Activated B cell treated with CpG ODN at 0.5 μM for 24 hours (primary cell): ENCODE measurements at regions of chr20 and their contacts with region 1.

Region 1: GRCh38 chr20:63973636-63974402 is 4.1 kb upstream of the ZNF512B start:
- DNase-seq: peak; percentile 87
- ATAC-seq: peak; percentile 66
- H3K4me3 Mint-ChIP-seq: peak overlapping the region; percentile 8
- H3K27ac Mint-ChIP-seq: no peak overlapping the region
- H3K4me1 Mint-ChIP-seq: peaks cover 28% of the 10 kb centered on the region
- H3K27me3 Mint-ChIP-seq: no peaks in the 10 kb centered on the region
- CTCF ChIP-seq: peak; percentile 72

Region 2: DNA sequence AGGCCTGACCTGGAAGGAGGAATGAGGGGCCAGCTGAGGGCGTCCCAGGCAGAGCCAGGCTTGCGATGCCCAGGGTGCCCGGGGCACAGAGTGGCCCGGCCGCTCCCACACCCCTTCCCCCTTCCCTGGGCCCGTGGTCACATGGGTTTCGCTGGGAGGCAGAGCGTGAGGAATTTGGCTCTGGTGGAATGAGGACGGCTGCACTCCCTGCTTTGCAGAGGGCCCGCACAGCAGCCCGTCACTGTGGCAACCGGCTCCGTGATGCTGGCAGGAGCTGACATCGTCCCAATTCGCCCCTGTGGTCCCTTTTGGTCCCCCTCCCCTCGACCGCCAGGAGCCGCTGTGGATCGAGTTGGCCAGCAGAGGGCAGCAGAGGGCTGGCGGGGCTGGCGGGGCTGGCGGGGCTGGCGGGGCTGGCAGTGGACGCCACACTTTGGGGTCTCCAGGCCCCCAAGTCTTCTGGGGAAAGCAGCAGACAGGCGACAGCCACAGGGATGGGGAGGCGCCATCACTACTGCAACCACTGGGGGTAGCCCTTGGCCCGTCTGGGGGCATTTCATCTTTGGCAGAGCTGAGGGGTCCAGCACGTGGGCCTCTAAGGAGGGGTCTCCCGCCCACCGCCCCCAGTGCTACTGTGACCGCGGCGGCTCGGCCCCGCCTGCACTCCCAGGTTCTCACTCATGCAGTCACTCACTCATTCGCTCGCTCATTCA is 917.4 kb before region 1 on chr20:
- CTCF ChIA-PET with region 1: no interaction called
- POLR2A ChIA-PET with region 1: no interaction called
- intact Hi-C with region 1: loop called (anchors 5 kb)
- DNase-seq: peak; percentile 47
- ATAC-seq: peak; percentile 57
- H3K4me3 Mint-ChIP-seq: no peak overlapping the region
- H3K27ac Mint-ChIP-seq: no peak overlapping the region
- H3K4me1 Mint-ChIP-seq: no peaks in the 10 kb centered on the region
- H3K27me3 Mint-ChIP-seq: peaks cover 13% of the 10 kb centered on the region
- CTCF ChIP-seq: peak; percentile 52

Region 3: GRCh38 chr20:63309261-63310071 is 664.4 kb before region 1 on chr20:
- CTCF ChIA-PET with region 1: interaction called, 4 read pairs
- POLR2A ChIA-PET with region 1: no interaction called
- intact Hi-C with region 1: loop called (anchors 5 kb)
- DNase-seq: no peak
- ATAC-seq: peak; percentile 34
- H3K4me3 Mint-ChIP-seq: no peak overlapping the region
- H3K27ac Mint-ChIP-seq: no peak overlapping the region
- H3K4me1 Mint-ChIP-seq: no peaks in the 10 kb centered on the region
- H3K27me3 Mint-ChIP-seq: peaks cover 2% of the 10 kb centered on the region
- CTCF ChIP-seq: peak; percentile 21

Region 4: DNA sequence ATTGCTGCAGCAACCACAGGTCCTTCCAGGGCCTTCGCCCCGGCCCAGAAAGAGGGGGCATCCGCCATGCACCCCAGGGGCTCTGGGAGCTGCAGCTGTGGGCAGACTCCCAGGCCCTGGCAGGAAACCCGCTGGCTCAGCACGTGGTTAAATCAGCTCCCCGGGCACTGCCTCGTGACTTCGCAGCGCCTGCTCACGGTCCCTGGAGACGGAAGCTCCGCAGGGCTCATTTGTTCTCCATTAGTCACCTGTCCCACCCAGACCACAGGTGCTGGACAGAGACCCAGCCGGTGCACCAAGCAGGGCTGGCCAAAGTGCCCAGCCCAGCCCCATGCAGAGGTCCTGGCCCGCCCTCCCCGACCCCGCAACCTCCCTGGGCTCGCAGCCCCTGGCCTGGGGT is 516.1 kb before region 1 on chr20:
- CTCF ChIA-PET with region 1: no interaction called
- POLR2A ChIA-PET with region 1: no interaction called
- intact Hi-C with region 1: no loop called
- DNase-seq: no peak
- ATAC-seq: peak; percentile 52
- H3K4me3 Mint-ChIP-seq: no peak overlapping the region
- H3K27ac Mint-ChIP-seq: no peak overlapping the region
- H3K4me1 Mint-ChIP-seq: peaks cover 11% of the 10 kb centered on the region
- H3K27me3 Mint-ChIP-seq: peaks cover 29% of the 10 kb centered on the region
- CTCF ChIP-seq: no peak

Region 5: DNA sequence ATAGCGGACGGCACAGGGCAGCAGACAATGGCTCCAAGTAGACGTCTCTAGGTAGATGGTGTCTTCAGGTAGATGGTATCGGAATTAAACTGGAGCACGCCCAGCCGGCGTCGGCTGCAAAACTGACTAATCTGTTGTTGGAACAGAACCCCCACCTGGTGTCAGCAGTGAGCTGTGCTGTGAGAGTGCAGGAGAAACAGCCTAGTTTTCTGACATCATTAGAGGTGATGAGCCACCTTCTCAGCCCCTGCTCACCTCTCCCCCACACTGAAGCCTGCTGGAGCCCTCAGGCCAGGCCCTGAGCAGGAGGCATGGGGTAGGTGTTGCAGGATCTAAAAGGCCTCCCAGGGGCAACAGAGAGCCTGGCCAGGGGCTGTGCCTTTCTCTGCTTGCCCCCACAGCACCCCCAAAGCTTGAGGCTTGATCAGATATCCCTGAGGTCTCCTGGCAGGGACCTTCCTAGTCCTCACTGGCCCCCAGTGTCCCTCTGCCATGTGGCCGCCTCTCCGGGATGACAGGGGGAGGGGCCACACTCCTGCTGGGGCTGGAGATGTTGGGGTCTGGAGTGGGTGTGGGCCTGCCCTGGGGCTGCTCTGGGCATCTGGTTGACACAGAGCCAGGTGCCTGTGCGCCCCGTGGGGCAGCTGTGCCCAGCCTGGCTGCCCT is 392.9 kb before region 1 on chr20:
- CTCF ChIA-PET with region 1: no interaction called
- POLR2A ChIA-PET with region 1: no interaction called
- intact Hi-C with region 1: loop called (anchors 1 kb)
- DNase-seq: no peak
- ATAC-seq: peak; percentile 98
- H3K4me3 Mint-ChIP-seq: no peak overlapping the region
- H3K27ac Mint-ChIP-seq: no peak overlapping the region
- H3K4me1 Mint-ChIP-seq: peaks cover 5% of the 10 kb centered on the region
- H3K27me3 Mint-ChIP-seq: peaks cover 2% of the 10 kb centered on the region
- CTCF ChIP-seq: no peak

Region 6: DNA sequence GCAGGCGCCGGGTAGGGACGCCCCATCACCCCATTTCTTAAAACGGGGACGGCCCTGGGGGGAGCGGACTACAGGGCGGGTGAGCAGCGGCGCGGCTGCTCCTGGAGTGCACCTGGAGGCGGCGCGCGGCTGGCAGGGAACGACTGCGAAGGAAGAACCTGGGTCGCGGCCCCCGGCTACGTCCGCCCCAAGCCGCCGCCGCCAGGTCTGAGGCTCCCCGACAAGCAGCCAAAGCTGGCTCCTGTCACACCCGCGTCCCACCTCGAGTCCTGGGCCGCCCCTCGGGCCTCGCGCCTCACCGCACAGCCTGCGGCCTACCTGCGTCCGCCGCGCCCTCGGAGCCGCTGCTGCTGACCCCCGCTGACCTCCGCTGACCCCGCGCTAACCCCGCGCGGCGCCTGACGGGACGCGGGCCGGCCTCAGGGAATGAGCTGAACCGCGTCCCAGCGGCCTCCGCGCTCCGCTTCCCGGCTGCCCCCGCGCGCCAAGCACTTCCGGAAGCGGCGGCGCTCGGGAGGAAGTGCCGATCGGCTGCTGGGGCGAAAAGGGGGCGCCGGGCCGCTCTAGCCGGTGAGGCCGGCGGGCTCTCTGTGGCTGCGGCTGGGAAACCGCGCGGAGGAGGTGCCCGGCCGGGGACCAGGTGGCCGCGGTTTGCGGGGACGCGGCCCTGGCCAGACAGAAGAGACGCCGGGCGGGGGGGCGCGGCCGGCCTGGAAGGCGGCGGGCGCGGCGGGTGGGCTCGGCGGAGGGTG is 266.1 kb before region 1 on chr20 and contains the starts of genes ARFRP1 and ZGPAT:
- CTCF ChIA-PET with region 1: no interaction called
- POLR2A ChIA-PET with region 1: interaction called, 4 read pairs
- intact Hi-C with region 1: loop called (anchors 5 kb)
- DNase-seq: peak; percentile 91
- ATAC-seq: peak; percentile 94
- H3K4me3 Mint-ChIP-seq: peak within 1 kb of the TSS; percentile 87
- H3K27ac Mint-ChIP-seq: peak within 1 kb of the TSS; percentile 72
- H3K4me1 Mint-ChIP-seq: peaks cover 42% of the 10 kb centered on the region
- H3K27me3 Mint-ChIP-seq: no peaks in the 10 kb centered on the region
- CTCF ChIP-seq: no peak
- total RNA-seq, gene ARFRP1: 63.5 and 66.0 TPM in 2 replicates
- total RNA-seq, gene ZGPAT: 40.7 and 44.0 TPM in 2 replicates

Region 7: GRCh38 chr20:63767456-63767855 is 206.4 kb before region 1 on chr20:
- CTCF ChIA-PET with region 1: no interaction called
- POLR2A ChIA-PET with region 1: no interaction called
- intact Hi-C with region 1: no loop called
- DNase-seq: no peak
- ATAC-seq: no peak
- H3K4me3 Mint-ChIP-seq: no peak overlapping the region
- H3K27ac Mint-ChIP-seq: no peak overlapping the region
- H3K4me1 Mint-ChIP-seq: no peaks in the 10 kb centered on the region
- H3K27me3 Mint-ChIP-seq: no peaks in the 10 kb centered on the region
- CTCF ChIP-seq: no peak

Region 8: DNA sequence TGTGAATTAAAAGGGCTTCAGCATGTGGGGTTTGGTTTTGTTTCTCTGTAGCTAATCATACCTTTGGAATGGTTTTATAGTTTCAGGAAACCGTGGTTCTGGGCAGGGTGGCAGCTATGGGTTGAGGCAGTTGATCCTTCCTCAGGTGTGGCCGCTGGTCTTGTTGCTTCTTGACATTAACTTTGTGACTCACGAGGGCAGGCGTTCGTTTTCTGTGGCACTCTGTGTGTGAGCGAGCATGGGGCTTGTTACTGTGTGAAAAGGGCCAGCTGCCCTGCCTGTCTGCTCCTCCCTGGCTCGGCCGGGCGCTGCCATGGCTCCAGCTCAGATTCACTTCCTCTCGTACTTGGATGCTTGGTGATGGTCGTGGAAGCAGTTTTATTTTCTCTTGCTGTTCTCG is 62.6 kb before region 1 on chr20:
- CTCF ChIA-PET with region 1: interaction called, 10 read pairs
- POLR2A ChIA-PET with region 1: no interaction called
- intact Hi-C with region 1: no loop called
- DNase-seq: no peak
- ATAC-seq: no peak
- H3K4me3 Mint-ChIP-seq: no peak overlapping the region
- H3K27ac Mint-ChIP-seq: no peak overlapping the region
- H3K4me1 Mint-ChIP-seq: peaks cover 30% of the 10 kb centered on the region
- H3K27me3 Mint-ChIP-seq: no peaks in the 10 kb centered on the region
- CTCF ChIP-seq: no peak

Region 9: GRCh38 chr20:64038565-64039292 is 64.9 kb after region 1 on chr20:
- CTCF ChIA-PET with region 1: no interaction called
- POLR2A ChIA-PET with region 1: no interaction called
- intact Hi-C with region 1: no loop called
- DNase-seq: peak; percentile 81
- ATAC-seq: peak; percentile 89
- H3K4me3 Mint-ChIP-seq: peak overlapping the region; percentile 73
- H3K27ac Mint-ChIP-seq: no peak overlapping the region
- H3K4me1 Mint-ChIP-seq: peaks cover 17% of the 10 kb centered on the region
- H3K27me3 Mint-ChIP-seq: peaks cover 9% of the 10 kb centered on the region
- CTCF ChIP-seq: peak; percentile 17